WTC11 (cell line): ENCODE measurements at regions of chr17 and their contacts with region 1.

Region 1: GRCh38 chr17:61412143-61412859 is 12.7 kb downstream of the TBX2 start:
- DNase-seq: peak; percentile 81
- ATAC-seq: peak; percentile 38
- H3K4me3 Mint-ChIP-seq: peak overlapping the region; percentile 73
- H3K27ac Mint-ChIP-seq: no peak overlapping the region
- H3K4me1 Mint-ChIP-seq: peaks cover 20% of the 10 kb centered on the region
- H3K27me3 Mint-ChIP-seq: peaks cover 90% of the 10 kb centered on the region
- CTCF ChIP-seq: peak; percentile 98

Region 2: DNA sequence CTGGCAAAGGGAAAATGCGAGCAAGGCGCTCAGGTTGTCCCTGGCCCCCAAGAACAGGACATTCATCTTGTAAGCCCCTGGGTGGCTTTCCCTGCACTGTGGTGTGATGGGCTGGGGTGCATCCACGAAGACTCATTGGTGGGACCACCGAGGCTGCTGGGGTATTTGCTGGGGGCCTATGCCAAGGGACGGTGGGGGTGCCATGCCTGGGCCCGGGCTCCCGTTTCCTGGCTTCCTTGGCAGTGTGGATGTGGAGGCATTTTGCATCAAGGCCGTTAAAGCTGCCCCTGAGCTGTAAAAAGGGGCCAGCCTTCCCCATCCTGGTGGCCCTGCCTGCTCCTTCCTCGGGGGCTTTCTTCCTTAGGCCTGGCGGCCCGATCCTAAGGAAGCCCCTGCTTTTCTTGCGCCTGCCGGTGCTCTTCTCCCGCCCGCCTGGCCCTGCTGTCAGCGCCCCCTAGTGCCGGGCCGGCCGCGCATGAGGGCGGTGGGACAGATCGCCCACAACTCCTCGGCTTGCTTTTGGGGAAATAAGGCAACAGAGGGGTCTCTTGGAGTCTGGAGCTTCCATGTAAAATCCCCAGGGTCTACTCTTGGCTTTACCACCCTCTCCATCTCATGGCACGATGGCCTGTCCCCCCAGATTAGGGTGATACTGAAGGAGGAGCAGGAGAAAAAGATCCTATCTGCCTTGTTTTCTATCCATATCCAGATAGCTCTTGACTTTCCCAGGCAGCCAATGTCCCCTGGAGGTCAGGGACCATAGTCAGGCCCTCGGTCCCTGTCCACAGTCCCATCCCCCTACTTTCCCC is 22.4 kb before region 1 on chr17:
- CTCF ChIA-PET with region 1: interaction called, 12 read pairs
- POLR2A ChIA-PET with region 1: no interaction called
- DNase-seq: peak; percentile 83
- ATAC-seq: peak; percentile 88
- H3K4me3 Mint-ChIP-seq: no peak overlapping the region
- H3K27ac Mint-ChIP-seq: no peak overlapping the region
- H3K4me1 Mint-ChIP-seq: peaks cover 9% of the 10 kb centered on the region
- H3K27me3 Mint-ChIP-seq: peaks cover 36% of the 10 kb centered on the region
- CTCF ChIP-seq: peak; percentile 78

Region 3: DNA sequence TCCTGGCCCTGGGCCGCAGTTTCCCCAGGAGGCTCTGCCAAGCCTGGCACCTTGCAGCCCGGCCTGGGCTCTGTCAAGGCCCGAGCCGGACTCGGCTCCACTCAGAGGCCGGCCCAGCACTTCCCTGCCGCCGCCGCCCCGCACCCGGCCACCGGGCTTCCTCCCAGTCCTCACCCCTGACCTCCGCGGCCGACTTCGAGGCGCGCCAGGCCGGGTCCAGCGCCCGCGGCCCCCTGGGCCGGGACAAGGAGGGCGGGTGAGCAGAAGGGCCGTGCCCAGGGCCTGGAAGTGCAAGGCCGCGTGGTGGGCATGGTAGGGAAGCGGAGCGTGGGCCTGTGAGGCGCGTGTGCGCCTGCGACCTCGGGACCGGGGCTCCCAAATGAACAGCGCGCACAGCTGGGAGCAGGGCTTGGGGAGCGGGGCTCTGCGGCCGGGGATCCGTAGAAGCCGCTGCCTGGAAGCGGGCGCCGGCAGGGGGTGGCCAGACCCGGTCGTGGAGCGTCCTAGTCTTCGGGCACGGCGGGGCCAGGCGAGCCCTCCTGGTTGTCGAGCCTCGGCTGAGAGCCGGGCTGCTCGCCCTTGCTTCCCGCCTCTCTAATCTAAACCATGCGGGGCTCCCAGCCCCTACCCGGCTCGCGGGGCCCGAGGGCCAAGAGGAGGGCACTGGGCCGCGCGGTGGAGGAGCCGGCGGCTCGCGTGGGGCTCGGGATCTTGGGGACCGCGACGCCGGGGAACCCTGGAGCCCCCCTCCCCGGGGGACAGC is 39.4 kb after region 1 on chr17:
- CTCF ChIA-PET with region 1: interaction called, 18 read pairs
- POLR2A ChIA-PET with region 1: no interaction called
- DNase-seq: peak; percentile 60
- ATAC-seq: peak; percentile 19
- H3K4me3 Mint-ChIP-seq: peak overlapping the region; percentile 55
- H3K27ac Mint-ChIP-seq: no peak overlapping the region
- H3K4me1 Mint-ChIP-seq: peaks cover 40% of the 10 kb centered on the region
- H3K27me3 Mint-ChIP-seq: peaks cover 98% of the 10 kb centered on the region
- CTCF ChIP-seq: no peak

Region 4: GRCh38 chr17:61574542-61575174 is 162.4 kb after region 1 on chr17:
- CTCF ChIA-PET with region 1: interaction called, 46 read pairs
- POLR2A ChIA-PET with region 1: interaction called, 5 read pairs
- DNase-seq: peak; percentile 41
- ATAC-seq: peak; percentile 91
- H3K4me3 Mint-ChIP-seq: no peak overlapping the region
- H3K27ac Mint-ChIP-seq: no peak overlapping the region
- H3K4me1 Mint-ChIP-seq: peaks cover 4% of the 10 kb centered on the region; the same call in 1 of the 2 replicates
- H3K27me3 Mint-ChIP-seq: peaks cover 3% of the 10 kb centered on the region; the same call in 1 of the 2 replicates
- CTCF ChIP-seq: no peak

Region 5: GRCh38 chr17:61647047-61647446 is 234.7 kb after region 1 on chr17:
- CTCF ChIA-PET with region 1: no interaction called
- POLR2A ChIA-PET with region 1: no interaction called
- DNase-seq: no peak
- ATAC-seq: no peak
- H3K4me3 Mint-ChIP-seq: no peak overlapping the region
- H3K27ac Mint-ChIP-seq: no peak overlapping the region
- H3K4me1 Mint-ChIP-seq: peaks cover 9% of the 10 kb centered on the region
- H3K27me3 Mint-ChIP-seq: peaks cover 3% of the 10 kb centered on the region; the same call in 1 of the 2 replicates
- CTCF ChIP-seq: no peak